Right ventricle myocardium superior (tissue), 1 donor: ENCODE measurements at regions of chr13 and their contacts with region 1.

Region 1: DNA sequence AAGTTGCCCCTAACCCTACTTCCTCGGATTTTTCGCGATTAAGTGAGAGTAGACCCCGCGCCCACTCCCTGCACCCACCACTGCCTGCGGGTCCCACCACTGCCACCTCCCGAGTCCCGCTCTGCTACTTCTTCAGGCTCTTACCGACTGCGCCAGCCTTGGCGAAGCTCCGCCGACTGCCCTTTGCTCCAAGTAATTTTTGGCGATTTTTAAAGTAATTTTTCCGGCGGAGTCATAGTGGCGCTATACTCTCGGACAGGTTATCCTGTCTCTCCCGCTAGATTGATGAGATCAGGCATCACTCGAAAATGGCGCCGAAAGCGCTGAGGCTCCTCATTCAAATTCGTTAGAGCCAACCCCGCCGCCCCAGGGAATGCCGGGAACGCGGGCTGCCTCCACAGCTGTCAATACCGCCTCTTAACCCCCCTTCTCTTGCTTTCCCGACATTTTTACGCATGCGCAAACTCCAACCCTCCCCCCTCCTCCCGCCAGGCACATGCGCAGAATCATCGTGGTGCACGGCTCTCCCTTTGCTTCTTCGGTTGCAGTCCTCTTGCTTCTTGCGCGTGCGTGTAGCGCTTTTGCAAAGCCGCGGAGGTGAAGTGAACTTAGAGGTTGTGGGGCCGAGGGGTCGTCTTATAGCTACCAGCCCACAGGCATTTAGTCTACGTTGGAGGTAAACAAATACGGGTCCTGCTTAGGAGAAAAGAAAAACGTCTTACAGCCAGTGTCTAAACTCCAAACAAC is 66.6 kb downstream of the KCNRG start:
- DNase-seq: peak; percentile 98
- ATAC-seq: peak; percentile 97

Region 2: DNA sequence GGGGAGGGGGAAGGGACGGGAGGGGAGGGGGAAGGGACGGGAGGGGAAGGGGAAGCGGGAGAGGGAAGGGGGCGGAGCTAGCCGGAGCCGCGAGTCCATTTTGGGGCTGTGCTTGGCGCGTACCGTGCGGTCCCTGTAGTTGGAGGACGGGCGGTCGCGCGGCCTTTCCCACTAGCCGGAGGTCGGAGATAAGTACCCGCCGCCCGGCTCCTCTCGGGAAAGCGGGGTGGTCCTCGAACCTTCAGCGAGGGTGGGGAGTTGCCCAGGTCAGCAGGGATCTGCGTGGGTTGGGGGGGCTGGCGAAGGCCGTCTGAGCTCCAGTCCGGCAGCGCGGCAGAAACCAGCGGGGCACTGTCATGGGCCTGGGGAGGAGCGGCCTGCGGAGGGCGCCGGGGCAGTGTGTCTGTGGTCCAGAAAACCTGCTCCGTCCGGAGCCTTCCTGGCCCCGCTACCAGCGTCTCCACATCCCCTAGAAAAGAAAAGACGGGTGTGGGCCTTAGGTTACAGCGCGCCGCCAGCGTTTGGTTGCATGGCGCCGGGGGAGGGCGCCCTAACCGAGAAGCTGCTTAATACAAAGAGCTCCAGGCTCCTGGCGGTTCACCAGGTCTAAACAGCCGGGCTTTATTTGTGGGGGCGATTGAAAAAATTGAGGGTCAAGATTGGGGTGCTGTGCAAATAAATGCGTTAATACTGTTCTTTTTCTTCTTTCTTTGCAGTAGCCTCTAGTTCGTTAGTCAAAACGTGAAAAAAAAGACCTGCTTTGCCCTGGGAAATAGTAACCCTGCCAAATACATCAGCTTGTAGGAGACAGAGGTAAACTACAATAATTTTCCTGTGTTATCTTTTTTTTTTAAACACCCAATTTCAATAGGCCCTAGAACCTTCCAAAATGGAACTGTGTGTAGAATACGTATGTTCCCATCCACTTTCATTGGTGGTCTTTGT is 84.6 kb before region 1 on chr13 and contains the start of gene TRIM13:
- intact Hi-C with region 1: loop called (anchors 5 kb)
- DNase-seq: peak; percentile 94
- ATAC-seq: peak; percentile 89
- total RNA-seq, gene TRIM13: 22.3 TPM

Region 3: DNA sequence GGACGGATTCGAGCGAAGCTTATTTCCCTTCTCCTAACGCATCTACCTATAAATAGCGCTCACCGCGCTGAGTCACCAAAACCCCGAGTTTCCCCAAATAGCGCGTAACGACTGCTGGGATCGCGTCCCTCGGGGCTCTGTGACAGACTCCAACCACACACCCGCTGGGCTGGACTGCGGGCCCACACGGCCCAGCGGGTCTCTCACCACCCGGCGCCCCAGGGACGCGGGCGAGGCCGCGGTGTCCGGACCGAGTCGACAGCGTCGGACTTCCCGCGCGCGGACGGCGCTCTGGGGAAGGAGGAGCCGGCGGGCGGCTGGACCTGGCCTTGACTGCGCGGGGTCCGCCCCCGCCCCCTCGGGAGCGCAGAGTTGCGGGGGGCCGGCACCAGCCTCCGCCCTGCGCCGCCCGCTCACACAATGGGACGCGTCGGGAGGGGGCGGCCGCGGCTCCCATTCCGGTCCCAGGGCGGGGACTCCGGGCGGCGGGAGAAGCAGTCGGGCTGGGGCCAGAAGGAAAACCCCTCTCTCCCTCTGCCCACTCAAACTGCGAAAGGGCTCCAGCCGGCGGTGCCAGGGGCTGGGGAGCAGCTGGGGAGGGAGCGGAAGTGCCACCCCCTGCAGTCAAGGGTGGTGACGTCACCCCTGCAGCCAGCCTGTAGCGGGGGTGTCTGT is 42.1 kb after region 1 on chr13:
- intact Hi-C with region 1: loop called (anchors 2 kb)
- DNase-seq: no peak
- ATAC-seq: peak; percentile 89

Region 4: GRCh38 chr13:50290186-50290585 is 208.3 kb after region 1 on chr13:
- intact Hi-C with region 1: no loop called
- DNase-seq: no peak
- ATAC-seq: no peak

Region 5: GRCh38 chr13:50801087-50801931 is 719.5 kb after region 1 on chr13:
- intact Hi-C with region 1: loop called (anchors 10 kb)
- DNase-seq: peak; percentile 33
- ATAC-seq: peak; percentile 96